H1 (cell line): ENCODE measurements at regions of chr11 and their contacts with region 1.

Region 1: GRCh38 chr11:2092956-2093412 is 46.2 kb downstream of the IGF2 start:
- DNase-seq: no peak
- H3K4me3 ChIP-seq: no peak overlapping the region
- H3K27ac ChIP-seq: no peak overlapping the region
- H3K4me1 ChIP-seq: peaks cover 0 to 15% (median 12%) of the 10 kb centered on the region in 4 experiments; a peak in 6 of 7 replicates
- H3K27me3 ChIP-seq: 0 out of 7 replicates have a peak, but pooled peaks cover 0 to 3% (median 0%) of the 10 kb centered on the region in 4 experiments
- CTCF ChIP-seq: no peak
- EP300 ChIP-seq: no peak
- POLR2A ChIP-seq: no peak
- RAD21 ChIP-seq: no peak

Region 2: GRCh38 chr11:2074266-2074825 is 18.6 kb before region 1 on chr11:
- CTCF ChIA-PET with region 1: interaction called, 24 read pairs
- POLR2A ChIA-PET with region 1: interaction called, 3 read pairs
- DNase-seq: peak in 1 of 2 experiments; percentile 75
- H3K4me3 ChIP-seq: no peak overlapping the region
- H3K27ac ChIP-seq: no peak overlapping the region
- H3K4me1 ChIP-seq: no peaks in the 10 kb centered on the region
- H3K27me3 ChIP-seq: peaks cover 0 to 7% (median 4%) of the 10 kb centered on the region in 4 experiments; a peak in 3 of 7 replicates
- CTCF ChIP-seq: peak; percentile 63 to 85 (median 71)
- EP300 ChIP-seq: no peak
- POLR2A ChIP-seq: no peak
- RAD21 ChIP-seq: peak; percentile 38 to 54